ENCODE measurements at regions of chrX and their contacts with region 1.

Region 1: DNA sequence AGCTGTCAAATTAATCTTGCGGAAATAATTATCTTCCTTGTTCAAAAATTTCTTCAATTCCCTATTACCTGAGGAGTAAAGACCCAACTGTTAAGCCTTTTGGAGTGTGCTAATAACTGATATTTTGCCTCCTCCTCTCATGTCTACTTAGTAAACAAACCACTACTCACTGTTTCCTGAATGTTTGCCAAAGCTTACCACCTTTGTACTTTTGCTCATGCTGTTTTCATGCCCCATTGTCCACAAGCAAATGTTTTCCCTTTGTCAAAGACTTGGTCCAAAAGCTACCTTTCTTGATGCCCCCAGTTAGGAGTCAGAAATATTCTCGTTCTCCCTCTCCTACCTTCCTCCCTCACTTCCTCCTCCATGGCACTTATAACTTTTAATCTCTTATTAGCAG is 226.1 kb downstream of the ENOX2 start:
- DNase-seq: no peak
- ATAC-seq: no peak
- H3K4me3 ChIP-seq: no peak overlapping the region
- H3K27ac ChIP-seq: no peak overlapping the region
- H3K4me1 ChIP-seq: peaks cover 0 to 1% of the 10 kb centered on the region in 2 donors
- H3K27me3 ChIP-seq: no peaks in the 10 kb centered on the region

Region 2: GRCh38 chrX:130878350-130879341 is 201.8 kb after region 1 on chrX:
- intact Hi-C with region 1: loop called in 1 of 2 experiments (anchors 10 kb)
- DNase-seq: peak in 1 of 2 donors; percentile 64
- ATAC-seq: peak; percentile 57
- H3K4me3 ChIP-seq: no peak overlapping the region
- H3K27ac ChIP-seq: no peak overlapping the region
- H3K4me1 ChIP-seq: peaks cover 0 to 6% of the 10 kb centered on the region in 2 donors
- H3K27me3 ChIP-seq: no peaks in the 10 kb centered on the region

Region 3: GRCh38 chrX:130896802-130897501 is 220.1 kb after region 1 on chrX:
- intact Hi-C with region 1: loop called in 1 of 2 experiments (anchors 10 kb)
- DNase-seq: no peak
- ATAC-seq: peak; percentile 37
- H3K4me3 ChIP-seq: no peak overlapping the region
- H3K27ac ChIP-seq: no peak overlapping the region
- H3K4me1 ChIP-seq: peaks cover 0 to 2% of the 10 kb centered on the region in 2 donors
- H3K27me3 ChIP-seq: no peaks in the 10 kb centered on the region